ENCODE measurements at regions of chr3 and their contacts with region 1.

Region 1: GRCh38 chr3:186617038-186617946 is 4.4 kb downstream of the AHSG start:
- DNase-seq: peak; percentile 55 to 82 (median 63)
- H3K4me3 ChIP-seq: no peak overlapping the region
- H3K27ac ChIP-seq: no peak overlapping the region
- H3K4me1 ChIP-seq: no peaks in the 10 kb centered on the region
- H3K27me3 ChIP-seq: no peaks in the 10 kb centered on the region
- CTCF ChIP-seq: peak; percentile 27 to 41 (median 35)
- EP300 ChIP-seq: no peak
- POLR2A ChIP-seq: no peak

Region 2: GRCh38 chr3:185983495-185984141 is 633.7 kb before region 1 on chr3:
- intact Hi-C with region 1: loop called in 1 of 4 experiments (anchors 5 kb)
- DNase-seq: peak; percentile 50 to 72 (median 64)
- H3K4me3 ChIP-seq: no peak overlapping the region
- H3K27ac ChIP-seq: no peak overlapping the region
- H3K4me1 ChIP-seq: no peaks in the 10 kb centered on the region
- H3K27me3 ChIP-seq: no peaks in the 10 kb centered on the region
- CTCF ChIP-seq: peak; percentile 69 to 75 (median 75)
- EP300 ChIP-seq: no peak
- POLR2A ChIP-seq: no peak

Region 3: GRCh38 chr3:186241910-186242821 is 375.1 kb before region 1 on chr3:
- intact Hi-C with region 1: no loop called
- DNase-seq: peak in 2 of 5 donors; percentile 35 to 45
- H3K4me3 ChIP-seq: no peak overlapping the region
- H3K27ac ChIP-seq: no peak overlapping the region
- H3K4me1 ChIP-seq: peaks cover 4% of the 10 kb centered on the region
- H3K27me3 ChIP-seq: no peaks in the 10 kb centered on the region
- CTCF ChIP-seq: no peak
- EP300 ChIP-seq: no peak
- POLR2A ChIP-seq: no peak

Region 4: GRCh38 chr3:186815435-186815834 is 198.1 kb after region 1 on chr3:
- intact Hi-C with region 1: loop called in 2 of 4 experiments (anchors 10 kb)
- DNase-seq: no peak
- H3K4me3 ChIP-seq: no peak overlapping the region
- H3K27ac ChIP-seq: no peak overlapping the region
- H3K4me1 ChIP-seq: no peaks in the 10 kb centered on the region
- H3K27me3 ChIP-seq: no peaks in the 10 kb centered on the region
- CTCF ChIP-seq: no peak
- EP300 ChIP-seq: no peak
- POLR2A ChIP-seq: no peak

Region 5: DNA sequence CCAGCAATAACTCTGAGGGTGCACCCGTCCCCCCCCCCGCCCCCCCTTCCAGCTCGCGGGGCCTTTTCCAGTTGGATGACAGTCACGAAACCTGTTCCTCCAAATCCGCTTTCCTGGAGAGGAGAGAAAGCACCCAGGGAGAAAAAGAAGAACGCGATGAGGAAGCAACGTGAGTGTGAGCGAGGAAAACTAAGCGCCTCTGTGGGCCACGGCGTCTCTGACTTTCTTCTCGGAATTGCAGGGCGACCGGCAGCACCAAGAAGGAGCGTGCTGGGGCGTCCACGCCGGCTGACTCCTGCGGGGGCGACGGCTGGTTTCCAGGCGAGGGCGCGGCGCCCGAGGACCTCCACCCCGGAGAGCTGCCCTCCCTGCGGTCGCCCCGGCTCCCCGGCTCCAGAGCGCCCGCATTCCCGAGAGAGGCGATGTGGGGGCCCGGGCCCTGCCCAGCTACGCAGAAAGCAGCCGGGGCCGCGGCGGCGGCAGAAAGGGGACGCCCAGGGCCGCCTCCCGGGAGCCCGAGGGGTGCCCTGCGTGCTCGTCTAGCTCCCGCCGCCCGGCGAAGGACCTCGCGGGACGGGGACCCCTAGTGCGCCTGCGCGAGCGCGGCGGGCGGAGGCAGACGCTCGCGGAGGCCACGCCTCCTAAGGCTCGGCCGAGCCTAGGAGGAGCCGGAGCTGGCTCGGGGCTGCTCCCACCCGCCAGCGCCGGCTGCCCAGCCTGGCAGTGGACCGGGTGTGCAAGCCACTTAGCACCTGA is 209.9 kb after region 1 on chr3:
- intact Hi-C with region 1: loop called in 1 of 4 experiments (anchors 10 kb)
- DNase-seq: peak; percentile 70 to 86 (median 78)
- H3K4me3 ChIP-seq: peak overlapping the region; percentile 58
- H3K27ac ChIP-seq: no peak overlapping the region
- H3K4me1 ChIP-seq: peaks cover 2% of the 10 kb centered on the region
- H3K27me3 ChIP-seq: no peaks in the 10 kb centered on the region
- CTCF ChIP-seq: no peak
- EP300 ChIP-seq: no peak
- POLR2A ChIP-seq: no peak

Region 6: GRCh38 chr3:187164885-187165543 is 547.7 kb after region 1 on chr3:
- intact Hi-C with region 1: loop called in 2 of 4 experiments (anchors 10 kb)
- DNase-seq: peak in 1 of 5 donors; percentile 19
- H3K4me3 ChIP-seq: no peak overlapping the region
- H3K27ac ChIP-seq: no peak overlapping the region
- H3K4me1 ChIP-seq: peaks cover 1% of the 10 kb centered on the region
- H3K27me3 ChIP-seq: no peaks in the 10 kb centered on the region
- CTCF ChIP-seq: peak; percentile 27 to 37 (median 27)
- EP300 ChIP-seq: no peak
- POLR2A ChIP-seq: no peak

Region 7: DNA sequence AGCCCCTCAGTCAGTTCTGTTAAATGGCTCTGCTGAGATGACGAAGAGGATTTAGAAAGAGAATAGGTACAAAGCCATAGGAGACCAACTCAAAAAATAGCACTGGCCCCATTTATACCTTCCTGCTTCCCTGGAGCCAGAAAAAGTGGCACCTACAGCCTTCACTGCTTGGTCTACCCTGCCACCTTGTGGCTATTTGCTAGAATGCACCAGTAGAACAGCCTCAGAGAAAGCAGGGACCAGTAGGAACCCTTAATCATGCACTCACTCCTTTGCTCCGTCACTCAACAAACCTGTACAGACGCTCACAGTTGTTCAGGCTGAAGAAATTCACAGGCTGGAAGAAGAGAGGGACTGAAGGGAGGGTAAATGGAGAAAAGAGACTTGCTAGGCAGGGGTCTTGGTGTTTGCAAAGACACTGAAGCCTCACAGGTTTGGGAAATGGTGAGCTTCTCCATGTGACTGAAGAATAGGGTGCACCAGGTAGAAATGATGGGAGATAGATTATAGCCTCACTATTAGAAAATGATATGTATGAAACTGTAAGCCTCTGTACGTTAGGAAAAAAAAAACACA is 1097.2 kb after region 1 on chr3:
- intact Hi-C with region 1: loop called in 1 of 4 experiments (anchors 10 kb)
- DNase-seq: peak in 4 of 5 donors; percentile 52 to 78 (median 58)
- H3K4me3 ChIP-seq: no peak overlapping the region
- H3K27ac ChIP-seq: no peak overlapping the region
- H3K4me1 ChIP-seq: no peaks in the 10 kb centered on the region
- H3K27me3 ChIP-seq: no peaks in the 10 kb centered on the region
- CTCF ChIP-seq: peak; percentile 79 to 85 (median 80)
- EP300 ChIP-seq: no peak
- POLR2A ChIP-seq: no peak